Activated B cell treated with CpG ODN at 0.5 μM for 24 hours (primary cell): ENCODE measurements at regions of chr14 and their contacts with region 1.

Region 1: DNA sequence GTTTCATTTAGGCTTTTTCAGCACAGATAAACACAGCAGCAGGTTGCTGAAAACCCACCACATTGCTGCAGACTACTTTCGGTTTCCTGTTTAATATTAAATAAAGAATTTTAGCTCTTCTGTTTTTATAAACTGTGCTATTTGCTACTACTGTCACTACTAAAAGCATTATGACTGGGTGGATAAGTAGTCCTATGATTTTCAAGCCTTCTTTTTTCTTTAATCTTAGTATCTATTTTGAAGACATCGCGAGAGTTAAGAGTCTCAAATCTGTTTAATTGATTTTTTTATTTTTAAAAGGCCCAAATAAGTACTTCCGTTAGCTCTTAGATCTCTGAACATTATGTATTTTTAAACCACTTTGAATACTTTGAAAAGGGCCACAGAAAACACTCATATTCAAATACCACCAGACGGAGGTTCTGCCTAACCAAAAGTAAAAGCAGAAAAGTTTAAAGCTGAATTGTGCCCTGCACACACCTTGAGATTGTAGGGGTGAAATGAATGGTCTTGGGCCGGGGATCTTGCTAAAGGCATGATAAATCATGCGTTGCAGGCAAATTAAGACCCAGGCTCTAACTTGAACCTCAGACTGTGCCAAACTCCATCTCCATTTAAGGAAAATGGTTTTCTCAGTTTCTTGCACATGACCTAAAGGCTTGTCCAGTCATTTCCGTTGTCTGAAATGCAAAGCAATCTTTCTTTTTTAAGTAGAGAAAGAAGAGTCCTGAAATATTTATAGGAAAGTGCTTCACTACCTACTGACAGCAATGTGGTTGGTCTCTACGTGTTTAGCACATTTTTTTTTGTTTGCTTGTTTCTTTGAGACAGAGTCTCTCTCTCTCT is 13.6 kb upstream of the FOXN3 start:
- DNase-seq: no peak
- ATAC-seq: peak; percentile 93
- H3K4me3 Mint-ChIP-seq: peak overlapping the region; percentile 80
- H3K27ac Mint-ChIP-seq: peak overlapping the region; percentile 86
- H3K4me1 Mint-ChIP-seq: peaks cover 83% of the 10 kb centered on the region
- H3K27me3 Mint-ChIP-seq: no peaks in the 10 kb centered on the region
- CTCF ChIP-seq: no peak

Region 2: DNA sequence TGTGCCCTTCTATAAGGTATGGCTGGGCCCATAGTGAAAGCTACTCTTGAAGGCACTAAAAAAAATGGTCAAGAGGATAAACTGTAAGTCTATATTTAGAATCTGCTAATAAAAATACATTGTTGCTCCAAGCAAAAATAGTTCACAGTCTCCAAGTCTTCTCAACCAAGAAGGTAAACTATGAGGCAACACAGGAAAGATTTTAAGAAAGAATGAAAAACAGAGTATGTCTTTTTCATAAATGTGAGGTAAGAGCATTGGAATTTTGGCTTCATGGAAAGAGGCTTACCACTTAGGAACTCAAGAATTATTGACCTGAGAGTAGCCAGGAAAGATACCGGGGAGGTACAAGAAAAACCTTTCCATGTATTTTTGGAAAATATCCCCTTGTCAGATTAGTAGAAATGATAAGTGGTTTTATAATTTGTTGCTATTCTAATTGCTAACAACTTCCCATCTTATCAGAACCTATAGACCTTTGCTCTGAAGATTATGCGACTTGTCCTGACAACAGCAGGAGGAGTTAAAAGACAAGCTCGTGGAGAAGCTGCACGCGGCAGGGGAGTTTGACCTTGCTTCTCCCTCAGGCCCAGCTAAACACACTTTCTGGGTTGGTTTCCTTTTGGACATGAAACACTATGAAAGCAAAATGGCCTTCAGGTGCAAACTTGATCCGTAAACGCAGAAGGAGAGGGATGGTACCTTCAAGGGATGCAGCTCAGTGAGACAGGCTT is 251.6 kb before region 1 on chr14:
- CTCF ChIA-PET with region 1: interaction called, 12 read pairs
- POLR2A ChIA-PET with region 1: interaction called, 3 read pairs
- intact Hi-C with region 1: no loop called
- DNase-seq: no peak
- ATAC-seq: no peak
- H3K4me3 Mint-ChIP-seq: no peak overlapping the region
- H3K27ac Mint-ChIP-seq: peak overlapping the region; percentile 31
- H3K4me1 Mint-ChIP-seq: peaks cover 19% of the 10 kb centered on the region
- H3K27me3 Mint-ChIP-seq: no peaks in the 10 kb centered on the region
- CTCF ChIP-seq: no peak

Region 3: GRCh38 chr14:89445273-89445973 is 14.8 kb after region 1 on chr14:
- CTCF ChIA-PET with region 1: no interaction called
- POLR2A ChIA-PET with region 1: interaction called, 17 read pairs
- intact Hi-C with region 1: loop called (anchors 1 kb)
- DNase-seq: no peak
- ATAC-seq: peak; percentile 65
- H3K4me3 Mint-ChIP-seq: peak overlapping the region; percentile 55
- H3K27ac Mint-ChIP-seq: peak overlapping the region; percentile 85
- H3K4me1 Mint-ChIP-seq: peaks cover 78% of the 10 kb centered on the region
- H3K27me3 Mint-ChIP-seq: no peaks in the 10 kb centered on the region
- CTCF ChIP-seq: no peak

Region 4: GRCh38 chr14:89509891-89510290 is 79.3 kb after region 1 on chr14:
- CTCF ChIA-PET with region 1: no interaction called
- POLR2A ChIA-PET with region 1: interaction called, 6 read pairs
- intact Hi-C with region 1: loop called (anchors 1 kb)
- DNase-seq: no peak
- ATAC-seq: no peak
- H3K4me3 Mint-ChIP-seq: peak overlapping the region; percentile 81
- H3K27ac Mint-ChIP-seq: peak overlapping the region; percentile 93
- H3K4me1 Mint-ChIP-seq: peaks cover 42% of the 10 kb centered on the region
- H3K27me3 Mint-ChIP-seq: no peaks in the 10 kb centered on the region
- CTCF ChIP-seq: no peak

Region 5: DNA sequence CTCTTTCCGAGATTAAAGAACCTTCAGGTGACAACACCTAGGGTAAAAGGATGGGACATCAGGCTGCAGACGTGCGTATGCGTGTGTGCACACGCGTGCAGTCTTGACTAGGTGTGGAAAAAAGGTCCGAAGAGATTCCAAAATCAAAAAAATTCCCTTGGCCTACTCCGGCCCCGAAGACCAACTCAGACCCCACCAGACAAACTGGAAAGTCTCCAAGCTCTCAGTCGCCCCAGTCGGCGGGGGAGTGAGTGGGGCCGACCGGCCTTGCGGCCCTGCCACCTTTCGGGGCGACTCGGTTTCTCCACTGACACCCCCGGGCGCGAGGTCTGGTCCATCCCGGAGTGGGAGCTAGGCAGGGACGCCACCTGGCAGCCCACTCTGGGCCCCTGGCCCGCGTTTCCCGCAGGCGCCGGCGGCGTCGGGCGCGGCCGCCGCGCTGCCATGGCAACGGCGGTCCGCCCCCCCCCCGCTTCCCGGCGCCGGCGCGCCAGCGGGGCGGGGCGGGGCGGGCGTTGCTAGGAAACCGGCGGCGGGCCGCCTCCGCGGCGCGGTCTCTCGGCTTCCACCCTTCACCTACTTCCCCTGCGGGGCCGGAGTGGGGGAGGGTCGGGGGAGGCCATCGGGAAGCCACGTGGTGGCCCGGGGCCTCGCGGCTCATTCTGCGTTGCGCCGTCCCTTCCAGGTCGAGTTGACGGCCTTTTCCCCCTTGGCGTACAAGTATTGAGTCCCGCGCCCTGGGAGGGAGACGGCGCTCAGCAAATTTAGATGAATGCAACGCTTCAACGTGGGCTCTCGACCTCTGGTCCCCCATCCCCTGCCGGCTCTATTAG is 270.8 kb after region 1 on chr14:
- CTCF ChIA-PET with region 1: no interaction called
- POLR2A ChIA-PET with region 1: interaction called, 3 read pairs
- intact Hi-C with region 1: loop called (anchors 5 kb)
- DNase-seq: peak; percentile 81
- ATAC-seq: peak; percentile 95
- H3K4me3 Mint-ChIP-seq: peak overlapping the region; percentile 77
- H3K27ac Mint-ChIP-seq: peak overlapping the region; percentile 86
- H3K4me1 Mint-ChIP-seq: peaks cover 28% of the 10 kb centered on the region
- H3K27me3 Mint-ChIP-seq: no peaks in the 10 kb centered on the region
- CTCF ChIP-seq: no peak

Region 6: DNA sequence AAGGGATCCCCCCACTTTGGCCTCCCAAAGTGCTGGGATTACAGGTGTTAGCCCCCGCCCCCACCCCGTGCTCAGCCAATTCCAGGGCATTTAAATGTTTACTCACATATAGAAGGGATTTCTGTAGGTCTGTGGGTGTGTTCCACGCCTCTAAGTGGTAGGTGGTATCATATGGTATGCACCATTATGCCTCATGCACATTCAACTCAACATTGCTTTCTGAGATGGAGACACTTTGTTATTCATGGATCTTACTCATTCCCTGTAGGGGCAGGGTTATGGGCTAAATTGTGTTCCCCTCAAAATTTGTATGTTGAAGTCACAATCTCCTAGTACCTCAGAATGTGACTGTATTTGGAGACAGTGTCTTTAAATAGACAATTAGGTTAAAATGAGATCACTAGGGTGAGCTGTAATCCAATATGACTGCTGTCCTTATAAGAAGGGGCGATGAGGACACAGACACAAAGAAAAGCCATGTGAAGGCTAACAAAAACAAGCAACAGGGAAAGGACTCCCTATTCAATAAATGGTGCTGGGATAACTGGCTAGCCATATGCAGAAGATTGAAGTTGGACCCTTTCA is 323.3 kb after region 1 on chr14:
- CTCF ChIA-PET with region 1: no interaction called
- POLR2A ChIA-PET with region 1: no interaction called
- intact Hi-C with region 1: no loop called
- DNase-seq: no peak
- ATAC-seq: no peak
- H3K4me3 Mint-ChIP-seq: no peak overlapping the region
- H3K27ac Mint-ChIP-seq: no peak overlapping the region
- H3K4me1 Mint-ChIP-seq: no peaks in the 10 kb centered on the region
- H3K27me3 Mint-ChIP-seq: no peaks in the 10 kb centered on the region
- CTCF ChIP-seq: no peak

Region 7: DNA sequence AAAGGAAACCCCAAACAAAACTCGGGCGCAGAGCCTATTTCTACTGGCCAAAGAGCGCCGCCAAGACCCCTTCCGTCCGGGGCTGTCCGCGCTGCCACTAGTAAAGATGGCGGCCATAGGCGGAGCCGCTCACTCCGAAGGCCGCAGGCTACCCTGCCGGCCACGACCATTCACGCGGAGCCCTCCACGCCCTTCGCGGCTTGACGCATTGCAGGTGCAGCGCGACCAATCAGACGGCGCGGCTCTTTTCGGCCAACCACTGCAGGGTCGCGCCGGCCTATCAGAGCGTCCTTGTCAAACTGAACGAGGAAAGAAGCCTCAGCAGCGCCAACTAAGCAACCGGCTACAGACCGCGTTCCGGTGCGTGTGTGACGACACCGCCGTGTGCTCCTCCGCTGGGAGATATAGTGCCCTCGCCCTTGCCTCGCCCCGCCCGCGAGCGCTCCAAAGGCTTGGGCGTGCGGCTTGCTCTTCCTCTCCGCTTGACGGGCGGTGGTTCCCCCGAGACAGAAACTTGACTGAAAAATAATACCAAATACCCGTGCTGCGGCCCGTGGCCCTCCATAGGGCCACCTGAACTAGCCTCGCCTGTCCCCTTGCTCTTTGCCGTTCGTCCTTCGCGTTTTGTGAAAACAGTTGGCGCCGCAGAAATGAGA is 952.6 kb after region 1 on chr14:
- CTCF ChIA-PET with region 1: no interaction called
- POLR2A ChIA-PET with region 1: no interaction called
- intact Hi-C with region 1: loop called (anchors 2 kb)
- DNase-seq: peak; percentile 94
- ATAC-seq: peak; percentile 87
- H3K4me3 Mint-ChIP-seq: no peak overlapping the region
- H3K27ac Mint-ChIP-seq: no peak overlapping the region
- H3K4me1 Mint-ChIP-seq: no peaks in the 10 kb centered on the region
- H3K27me3 Mint-ChIP-seq: no peaks in the 10 kb centered on the region
- CTCF ChIP-seq: no peak